ENCODE measurements at regions of chr5 and their contacts with region 1.

Region 1: GRCh38 chr5:141605523-141606277 is 13.1 kb downstream of the DIAPH1 start:
- DNase-seq: peak; percentile 27 to 90 (median 79)
- ATAC-seq: peak; percentile 96 to 98
- H3K4me3 Mint-ChIP-seq: peak overlapping the region; percentile 58 to 80 (median 77)
- H3K27ac Mint-ChIP-seq: peak overlapping the region; percentile 78 to 95 (median 90)
- H3K4me1 Mint-ChIP-seq: peaks cover 22 to 99% (median 78%) of the 10 kb centered on the region in 4 donors
- H3K27me3 Mint-ChIP-seq: no peaks in the 10 kb centered on the region

Region 2: GRCh38 chr5:141326088-141326854 is 279.4 kb before region 1 on chr5:
- POLR2A ChIA-PET with region 1: no interaction called
- DNase-seq: peak in 9 of 10 donors; percentile 50 to 81 (median 66)
- ATAC-seq: peak; percentile 96 to 97
- H3K4me3 Mint-ChIP-seq: peak overlapping the region; percentile 84 to 98 (median 93)
- H3K27ac Mint-ChIP-seq: peak overlapping the region; percentile 51 to 93 (median 88)
- H3K4me1 Mint-ChIP-seq: peaks cover 6 to 8% (median 7%) of the 10 kb centered on the region in 4 donors
- H3K27me3 Mint-ChIP-seq: peaks cover 8 to 48% (median 41%) of the 10 kb centered on the region in 5 donors

Region 3: GRCh38 chr5:141636413-141637122 is 30.9 kb after region 1 on chr5 and contains the starts of genes HDAC3 and RELL2:
- POLR2A ChIA-PET with region 1: interaction called, 10 read pairs
- DNase-seq: peak; percentile 86 to 97 (median 94)
- ATAC-seq: peak; percentile 73 to 83
- H3K4me3 Mint-ChIP-seq: peak within 1 kb of the TSS; percentile 85 to 97 (median 92)
- H3K27ac Mint-ChIP-seq: peak within 1 kb of the TSS; percentile 31 to 97 (median 92)
- H3K4me1 Mint-ChIP-seq: peaks cover 23 to 50% (median 39%) of the 10 kb centered on the region in 4 donors
- H3K27me3 Mint-ChIP-seq: no peaks in the 10 kb centered on the region
- polyA plus RNA-seq, gene HDAC3: 85.7 to 100 (median 91.7) TPM
- polyA plus RNA-seq, gene RELL2: 2.6 to 3.9 (median 3.4) TPM